WTC11 (cell line): ENCODE measurements at regions of chr10 and their contacts with region 1.

Region 1: DNA sequence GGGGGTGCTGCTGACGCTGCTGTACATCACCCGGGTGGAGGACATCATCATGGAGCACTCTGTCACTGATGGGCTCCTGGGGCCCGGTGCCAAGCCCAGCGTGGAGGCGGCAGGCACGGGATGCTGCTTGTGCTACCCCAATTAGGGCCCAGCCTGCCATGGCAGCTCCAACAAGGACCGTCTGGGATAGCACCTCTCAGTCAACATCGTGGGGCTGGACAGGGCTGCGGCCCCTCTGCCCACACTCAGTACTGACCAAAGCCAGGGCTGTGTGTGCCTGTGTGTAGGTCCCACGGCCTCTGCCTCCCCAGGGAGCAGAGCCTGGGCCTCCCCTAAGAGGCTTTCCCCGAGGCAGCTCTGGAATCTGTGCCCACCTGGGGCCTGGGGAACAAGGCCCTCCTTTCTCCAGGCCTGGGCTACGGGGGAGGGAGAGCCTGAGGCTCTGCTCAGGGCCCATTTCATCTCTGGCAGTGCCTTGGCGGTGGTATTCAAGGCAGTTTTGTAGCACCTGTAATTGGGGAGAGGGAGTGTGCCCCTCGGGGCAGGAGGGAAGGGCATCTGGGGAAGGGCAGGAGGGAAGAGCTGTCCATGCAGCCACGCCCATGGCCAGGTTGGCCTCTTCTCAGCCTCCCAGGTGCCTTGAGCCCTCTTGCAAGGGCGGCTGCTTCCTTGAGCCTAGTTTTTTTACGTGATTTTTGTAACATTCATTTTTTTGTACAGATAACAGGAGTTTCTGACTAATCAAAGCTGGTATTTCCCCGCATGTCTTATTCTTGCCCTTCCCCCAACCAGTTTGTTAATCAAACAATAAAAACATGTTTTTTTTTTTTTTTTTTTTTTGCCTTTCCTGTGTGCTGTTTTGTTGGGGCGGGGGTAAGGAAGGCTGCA is 55.8 kb downstream of the TSPAN15 start:
- DNase-seq: peak; percentile 28
- ATAC-seq: peak; percentile 9; the same call in 1 of the 2 replicates
- H3K4me3 Mint-ChIP-seq: peak overlapping the region; percentile 31; the same call in 1 of the 2 replicates
- H3K27ac Mint-ChIP-seq: peak overlapping the region; percentile 43; the same call in 1 of the 2 replicates
- H3K4me1 Mint-ChIP-seq: peaks cover 16% of the 10 kb centered on the region
- H3K27me3 Mint-ChIP-seq: no peaks in the 10 kb centered on the region
- CTCF ChIP-seq: no peak

Region 2: DNA sequence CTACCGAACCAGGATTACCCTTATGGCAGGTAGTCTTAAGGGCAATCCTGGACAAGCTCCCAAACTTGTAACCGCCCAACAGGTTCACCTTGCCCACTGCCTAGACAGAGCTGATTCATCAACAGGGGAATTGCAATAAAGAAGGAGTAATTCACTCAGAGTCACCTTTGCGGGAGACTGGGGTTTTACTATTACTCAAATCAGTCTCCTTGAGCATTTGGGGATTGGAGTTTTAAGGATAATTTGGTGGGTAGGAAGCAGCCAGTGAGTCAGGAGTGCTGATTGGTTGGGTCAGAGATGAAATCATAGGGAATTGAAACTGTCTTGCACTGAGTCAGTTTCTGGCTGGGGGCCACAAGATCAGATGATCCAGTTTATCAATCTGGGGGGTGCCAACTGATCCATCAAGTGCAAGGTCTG is 203.4 kb before region 1 on chr10:
- CTCF ChIA-PET with region 1: no interaction called
- POLR2A ChIA-PET with region 1: no interaction called
- DNase-seq: no peak
- ATAC-seq: no peak
- H3K4me3 Mint-ChIP-seq: no peak overlapping the region
- H3K27ac Mint-ChIP-seq: no peak overlapping the region
- H3K4me1 Mint-ChIP-seq: peaks cover 8% of the 10 kb centered on the region; the same call in 1 of the 2 replicates
- H3K27me3 Mint-ChIP-seq: no peaks in the 10 kb centered on the region; the same call in 1 of the 2 replicates
- CTCF ChIP-seq: no peak

Region 3: DNA sequence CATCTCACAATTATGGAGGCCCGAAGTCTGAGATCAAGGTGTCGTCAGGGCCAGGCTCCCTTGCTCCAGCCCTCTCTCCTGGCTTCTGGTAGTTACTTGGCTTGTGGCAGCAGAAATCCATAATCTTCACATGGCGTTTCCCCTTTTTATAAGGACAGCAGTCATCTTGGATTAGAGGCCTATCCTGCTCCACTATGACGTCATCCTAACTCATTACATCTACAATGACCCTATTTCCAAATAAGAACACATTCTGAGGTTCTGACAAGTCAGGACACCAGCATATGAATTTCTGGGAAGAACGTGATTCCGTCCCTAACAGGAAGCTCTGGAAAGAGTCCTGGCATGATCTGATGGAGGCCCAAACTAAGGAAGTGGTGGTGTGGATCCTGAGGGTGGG is 30.4 kb after region 1 on chr10:
- CTCF ChIA-PET with region 1: no interaction called
- POLR2A ChIA-PET with region 1: no interaction called
- DNase-seq: no peak
- ATAC-seq: no peak
- H3K4me3 Mint-ChIP-seq: no peak overlapping the region
- H3K27ac Mint-ChIP-seq: no peak overlapping the region
- H3K4me1 Mint-ChIP-seq: no peaks in the 10 kb centered on the region
- H3K27me3 Mint-ChIP-seq: peaks cover 29% of the 10 kb centered on the region
- CTCF ChIP-seq: no peak

Region 4: DNA sequence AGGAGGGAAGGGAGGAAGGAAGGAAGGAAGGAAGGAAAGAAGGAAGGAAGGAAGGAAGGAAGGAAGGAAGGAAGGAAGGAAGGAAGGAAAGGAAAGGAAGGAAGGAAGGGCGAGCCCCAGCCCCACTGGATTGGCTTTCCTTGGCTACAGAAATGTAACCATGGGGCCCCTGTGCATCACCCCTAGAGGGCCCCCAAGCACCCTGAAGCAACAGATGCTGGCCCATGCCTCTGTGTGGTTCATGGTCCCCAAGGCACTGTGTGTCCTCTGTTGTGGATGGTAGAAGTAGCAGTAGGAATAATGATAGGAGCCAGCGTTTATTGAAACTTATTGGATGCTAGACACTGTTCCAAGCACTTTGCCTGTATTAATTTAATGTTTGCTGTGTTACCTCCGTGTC is 429.0 kb after region 1 on chr10:
- CTCF ChIA-PET with region 1: no interaction called
- POLR2A ChIA-PET with region 1: interaction called, 10 read pairs
- DNase-seq: peak; percentile 41
- ATAC-seq: peak; percentile 81
- H3K4me3 Mint-ChIP-seq: no peak overlapping the region
- H3K27ac Mint-ChIP-seq: no peak overlapping the region
- H3K4me1 Mint-ChIP-seq: no peaks in the 10 kb centered on the region
- H3K27me3 Mint-ChIP-seq: no peaks in the 10 kb centered on the region; the same call in 1 of the 2 replicates
- CTCF ChIP-seq: no peak